Activated CD8-positive, alpha-beta T cell treated with anti-CD3 and anti-CD28 coated beads for 36 hours (primary cell): ENCODE measurements at regions of chr11 and their contacts with region 1.

Region 1: GRCh38 chr11:62905927-62906531 is 15.1 kb downstream of the CHRM1 start:
- DNase-seq: peak; percentile 82
- ATAC-seq: peak; percentile 82
- H3K4me3 Mint-ChIP-seq: no peak overlapping the region
- H3K27ac Mint-ChIP-seq: no peak overlapping the region
- H3K4me1 Mint-ChIP-seq: peaks cover 23% of the 10 kb centered on the region
- H3K27me3 Mint-ChIP-seq: peaks cover 12% of the 10 kb centered on the region
- CTCF ChIP-seq: peak; percentile 94

Region 2: DNA sequence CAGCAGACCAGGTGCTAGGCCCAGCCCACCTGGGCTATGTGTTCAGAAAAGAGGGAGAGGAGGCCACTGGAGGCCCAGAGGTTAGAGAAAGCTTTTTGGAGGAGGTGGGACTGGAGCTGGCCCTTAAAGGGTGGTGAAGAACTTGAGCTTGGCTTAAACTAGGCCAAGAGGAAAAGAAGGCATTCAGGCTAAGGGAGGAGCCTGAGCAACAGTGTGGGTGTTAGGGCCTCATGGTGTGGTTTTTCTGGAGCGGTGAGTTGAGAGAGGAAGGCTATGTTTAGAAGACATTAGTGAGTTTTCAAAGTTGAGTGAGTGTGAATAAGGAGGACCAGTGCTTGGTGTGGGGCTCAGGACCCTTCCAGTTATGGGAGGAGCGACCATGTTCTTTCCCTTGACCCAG is 128.6 kb before region 1 on chr11:
- CTCF ChIA-PET with region 1: no interaction called
- POLR2A ChIA-PET with region 1: no interaction called
- intact Hi-C with region 1: no loop called
- DNase-seq: peak; percentile 43
- ATAC-seq: peak; percentile 76
- H3K4me3 Mint-ChIP-seq: peak overlapping the region; percentile 1
- H3K27ac Mint-ChIP-seq: peak overlapping the region; percentile 85
- H3K4me1 Mint-ChIP-seq: peaks cover 16% of the 10 kb centered on the region
- H3K27me3 Mint-ChIP-seq: no peaks in the 10 kb centered on the region
- CTCF ChIP-seq: no peak

Region 3: GRCh38 chr11:62880803-62881578 is 25.0 kb before region 1 on chr11 and contains the start of gene SLC3A2:
- CTCF ChIA-PET with region 1: interaction called, 34 read pairs
- POLR2A ChIA-PET with region 1: interaction called, 7 read pairs
- intact Hi-C with region 1: no loop called
- DNase-seq: peak; percentile 91
- ATAC-seq: peak; percentile 76
- H3K4me3 Mint-ChIP-seq: peak within 1 kb of the TSS; percentile 99
- H3K27ac Mint-ChIP-seq: peak within 1 kb of the TSS; percentile 100
- H3K4me1 Mint-ChIP-seq: peaks cover 41% of the 10 kb centered on the region
- H3K27me3 Mint-ChIP-seq: no peaks in the 10 kb centered on the region
- CTCF ChIP-seq: peak; percentile 71
- total RNA-seq, gene SLC3A2: 299 to 315 TPM

Region 4: GRCh38 chr11:62922658-62923431 is 16.8 kb after region 1 on chr11:
- CTCF ChIA-PET with region 1: interaction called, 56 read pairs
- POLR2A ChIA-PET with region 1: interaction called, 5 read pairs
- intact Hi-C with region 1: no loop called
- DNase-seq: peak; percentile 84
- ATAC-seq: peak; percentile 74
- H3K4me3 Mint-ChIP-seq: peak overlapping the region; percentile 65
- H3K27ac Mint-ChIP-seq: peak overlapping the region; percentile 69
- H3K4me1 Mint-ChIP-seq: peaks cover 33% of the 10 kb centered on the region
- H3K27me3 Mint-ChIP-seq: peaks cover 56% of the 10 kb centered on the region
- CTCF ChIP-seq: peak; percentile 68

Region 5: DNA sequence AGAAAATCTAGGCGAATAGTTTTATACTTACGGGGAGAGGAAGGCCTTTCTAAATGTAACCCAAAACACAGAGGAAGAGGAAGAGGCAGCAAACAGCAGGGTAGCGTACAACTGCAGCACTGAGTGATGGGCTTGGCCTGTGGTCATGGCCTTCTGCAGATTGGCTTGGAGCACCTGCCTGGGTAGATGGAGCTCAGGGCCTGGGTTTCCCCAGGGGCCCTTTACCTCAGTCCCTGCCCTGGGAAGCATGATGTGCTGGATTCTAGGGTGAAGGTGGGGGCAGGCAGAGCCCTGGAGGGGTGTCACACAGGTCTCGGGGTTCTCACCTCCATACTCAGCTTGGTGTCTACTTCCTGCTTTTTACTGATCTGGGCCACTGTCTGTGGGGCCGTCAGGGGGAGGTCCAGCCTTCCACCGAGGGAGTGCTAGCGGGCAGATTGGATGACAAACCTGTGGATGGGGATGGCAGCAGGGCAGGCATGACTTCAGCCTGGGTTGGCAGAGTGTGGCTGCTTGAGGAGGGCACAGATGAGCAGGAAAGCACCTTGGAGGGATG is 42.8 kb after region 1 on chr11:
- CTCF ChIA-PET with region 1: interaction called, 12 read pairs
- POLR2A ChIA-PET with region 1: no interaction called
- intact Hi-C with region 1: no loop called
- DNase-seq: no peak
- ATAC-seq: no peak
- H3K4me3 Mint-ChIP-seq: no peak overlapping the region
- H3K27ac Mint-ChIP-seq: no peak overlapping the region
- H3K4me1 Mint-ChIP-seq: no peaks in the 10 kb centered on the region
- H3K27me3 Mint-ChIP-seq: peaks cover 13% of the 10 kb centered on the region
- CTCF ChIP-seq: no peak

Region 6: DNA sequence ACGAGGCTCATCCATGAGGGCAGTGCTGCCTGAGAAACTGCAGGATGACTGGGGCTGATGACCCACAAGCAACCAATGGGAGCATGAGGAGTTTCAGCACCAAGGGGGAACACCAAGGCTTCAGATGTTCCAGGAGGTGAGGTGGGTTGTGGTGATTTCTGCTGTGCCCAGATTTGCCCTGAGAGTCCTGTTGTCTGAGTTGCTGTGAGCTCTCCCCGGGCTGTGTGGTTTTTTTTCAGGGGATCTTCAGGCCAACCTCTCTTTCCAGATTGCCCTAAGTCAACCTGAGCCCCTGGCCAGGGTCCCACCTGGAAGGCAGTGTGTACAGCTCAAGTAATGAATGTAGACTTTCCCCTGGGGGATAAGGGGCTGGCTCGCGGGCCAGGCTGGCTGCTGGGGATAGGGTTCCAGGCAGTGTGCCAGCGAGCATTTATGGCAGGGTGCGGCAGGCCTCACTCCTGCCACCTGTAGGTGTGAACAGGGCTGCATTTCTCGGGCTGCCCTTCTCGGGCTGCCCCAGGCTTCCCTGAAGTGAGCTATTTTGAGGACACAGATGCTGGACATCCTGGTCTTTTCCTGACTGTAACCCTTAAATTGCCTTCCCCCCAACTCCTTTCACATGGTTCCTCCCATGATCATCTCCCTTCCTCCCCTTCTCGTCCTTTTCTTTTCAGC is 69.0 kb after region 1 on chr11:
- CTCF ChIA-PET with region 1: interaction called, 117 read pairs
- POLR2A ChIA-PET with region 1: no interaction called
- intact Hi-C with region 1: loop called (anchors 5 kb)
- DNase-seq: peak; percentile 49
- ATAC-seq: peak; percentile 79
- H3K4me3 Mint-ChIP-seq: no peak overlapping the region
- H3K27ac Mint-ChIP-seq: no peak overlapping the region
- H3K4me1 Mint-ChIP-seq: no peaks in the 10 kb centered on the region
- H3K27me3 Mint-ChIP-seq: peaks cover 16% of the 10 kb centered on the region
- CTCF ChIP-seq: peak; percentile 55

Region 7: DNA sequence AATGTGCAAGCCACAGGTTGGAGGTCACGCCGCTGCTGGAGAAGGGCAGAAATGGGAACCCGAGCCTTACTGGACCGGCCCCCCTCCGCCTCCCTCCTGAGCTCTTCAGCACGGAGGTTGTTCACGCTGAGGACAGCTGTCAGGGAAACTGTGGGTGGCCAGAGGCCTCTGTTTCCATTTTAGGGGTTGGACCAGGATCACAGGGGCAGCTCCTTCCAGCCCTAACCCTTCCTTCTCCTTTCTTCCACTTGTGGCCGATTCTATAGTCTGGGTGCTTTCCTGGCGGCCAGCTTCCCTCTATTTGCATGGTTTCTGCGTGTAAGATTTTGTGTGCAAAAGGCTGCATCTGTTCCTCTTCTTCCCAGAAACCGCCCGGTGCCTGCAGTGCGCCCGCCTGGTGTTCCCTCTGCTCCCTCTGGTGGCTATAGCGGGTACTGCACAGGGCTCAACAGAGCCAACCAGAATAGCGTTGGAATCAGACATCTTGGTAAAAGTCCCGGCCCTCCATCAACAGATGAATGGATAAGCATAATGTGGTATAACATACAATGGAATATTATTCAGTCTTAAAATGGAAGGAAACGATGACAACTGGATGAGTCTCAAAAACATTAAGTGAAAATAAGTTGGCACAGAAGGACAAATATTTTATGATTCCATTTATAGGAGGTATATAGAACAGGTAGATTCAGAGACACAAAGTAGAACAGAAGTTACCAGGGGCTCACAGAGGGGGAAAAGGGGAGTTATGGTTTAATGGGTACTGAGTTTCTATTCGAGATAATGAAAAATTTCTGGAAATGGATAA is 118.0 kb after region 1 on chr11:
- CTCF ChIA-PET with region 1: interaction called, 411 read pairs
- POLR2A ChIA-PET with region 1: interaction called, 8 read pairs
- intact Hi-C with region 1: loop called (anchors 1 kb)
- DNase-seq: peak; percentile 92
- ATAC-seq: peak; percentile 96
- H3K4me3 Mint-ChIP-seq: no peak overlapping the region
- H3K27ac Mint-ChIP-seq: no peak overlapping the region
- H3K4me1 Mint-ChIP-seq: peaks cover 2% of the 10 kb centered on the region
- H3K27me3 Mint-ChIP-seq: peaks cover 12% of the 10 kb centered on the region
- CTCF ChIP-seq: peak; percentile 100

Region 8: DNA sequence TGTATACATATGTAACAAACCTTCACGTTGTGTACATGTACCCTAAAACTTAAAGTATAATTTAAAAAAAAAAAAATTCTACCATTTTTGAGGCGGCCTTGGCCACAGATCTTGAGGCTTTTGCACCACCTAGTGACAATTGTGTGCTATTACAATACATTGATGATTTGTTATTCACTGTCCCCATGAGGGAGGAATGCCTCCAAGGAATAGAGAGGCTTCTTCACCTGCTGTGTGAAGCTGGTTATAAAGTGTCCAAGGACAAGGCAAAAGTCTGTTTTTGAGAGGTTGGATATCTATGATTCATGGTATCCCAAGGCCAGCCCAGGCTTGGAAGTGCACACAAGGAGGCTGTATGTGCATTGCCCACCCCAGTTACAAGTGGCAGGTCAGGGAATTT is 306.7 kb after region 1 on chr11:
- CTCF ChIA-PET with region 1: interaction called, 7 read pairs
- POLR2A ChIA-PET with region 1: no interaction called
- intact Hi-C with region 1: loop called (anchors 10 kb)
- DNase-seq: peak; percentile 14
- ATAC-seq: no peak
- H3K4me3 Mint-ChIP-seq: no peak overlapping the region
- H3K27ac Mint-ChIP-seq: no peak overlapping the region
- H3K4me1 Mint-ChIP-seq: no peaks in the 10 kb centered on the region
- H3K27me3 Mint-ChIP-seq: peaks cover 16% of the 10 kb centered on the region
- CTCF ChIP-seq: peak; percentile 66